PC-9 (cell line): ENCODE measurements at regions of chr1 and their contacts with region 1.

Region 1: DNA sequence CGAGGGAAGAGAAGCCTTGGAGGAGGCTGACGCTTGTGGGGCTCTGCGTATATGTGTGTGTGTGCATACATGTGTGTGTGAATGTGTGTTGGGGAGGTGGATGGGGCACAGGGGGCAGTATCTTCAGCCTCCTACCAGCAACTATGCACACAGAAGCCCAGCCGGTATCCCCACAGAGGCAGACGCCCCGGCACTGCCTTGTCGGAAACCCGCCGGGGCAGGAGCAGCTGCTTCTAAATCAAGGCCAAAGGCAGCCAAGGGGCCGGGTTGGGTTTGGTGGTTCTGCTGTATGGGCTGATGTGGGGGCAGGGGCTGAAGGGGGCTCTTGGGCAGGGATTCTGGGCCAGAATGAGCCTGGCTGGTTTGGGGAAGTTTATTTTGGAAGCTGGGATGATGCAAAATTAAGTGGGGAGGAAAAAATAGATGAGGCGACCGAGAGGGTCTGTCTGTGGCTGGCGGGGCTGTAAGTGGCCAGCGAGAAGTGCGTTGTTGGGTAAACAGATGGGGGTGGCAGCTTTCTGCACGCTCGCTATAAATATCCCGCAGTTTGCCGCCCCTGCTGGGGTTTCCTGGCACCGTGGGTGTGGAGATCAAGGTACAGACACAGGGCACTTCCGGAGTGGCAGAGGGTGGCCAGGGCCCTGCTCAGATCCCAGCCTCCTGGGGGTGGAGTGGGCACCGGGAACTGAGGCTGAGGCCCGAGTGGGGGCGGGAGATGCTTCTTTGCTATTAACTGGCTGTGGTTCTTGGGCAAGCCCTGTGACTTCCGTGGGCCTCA is 11.0 kb upstream of the WNT4 start:
- DNase-seq: no peak
- H3K4me3 ChIP-seq: no peak overlapping the region
- H3K27ac ChIP-seq: no peak overlapping the region
- H3K4me1 ChIP-seq: no peaks in the 10 kb centered on the region
- H3K27me3 ChIP-seq: no peaks in the 10 kb centered on the region
- CTCF ChIP-seq: no peak

Region 2: DNA sequence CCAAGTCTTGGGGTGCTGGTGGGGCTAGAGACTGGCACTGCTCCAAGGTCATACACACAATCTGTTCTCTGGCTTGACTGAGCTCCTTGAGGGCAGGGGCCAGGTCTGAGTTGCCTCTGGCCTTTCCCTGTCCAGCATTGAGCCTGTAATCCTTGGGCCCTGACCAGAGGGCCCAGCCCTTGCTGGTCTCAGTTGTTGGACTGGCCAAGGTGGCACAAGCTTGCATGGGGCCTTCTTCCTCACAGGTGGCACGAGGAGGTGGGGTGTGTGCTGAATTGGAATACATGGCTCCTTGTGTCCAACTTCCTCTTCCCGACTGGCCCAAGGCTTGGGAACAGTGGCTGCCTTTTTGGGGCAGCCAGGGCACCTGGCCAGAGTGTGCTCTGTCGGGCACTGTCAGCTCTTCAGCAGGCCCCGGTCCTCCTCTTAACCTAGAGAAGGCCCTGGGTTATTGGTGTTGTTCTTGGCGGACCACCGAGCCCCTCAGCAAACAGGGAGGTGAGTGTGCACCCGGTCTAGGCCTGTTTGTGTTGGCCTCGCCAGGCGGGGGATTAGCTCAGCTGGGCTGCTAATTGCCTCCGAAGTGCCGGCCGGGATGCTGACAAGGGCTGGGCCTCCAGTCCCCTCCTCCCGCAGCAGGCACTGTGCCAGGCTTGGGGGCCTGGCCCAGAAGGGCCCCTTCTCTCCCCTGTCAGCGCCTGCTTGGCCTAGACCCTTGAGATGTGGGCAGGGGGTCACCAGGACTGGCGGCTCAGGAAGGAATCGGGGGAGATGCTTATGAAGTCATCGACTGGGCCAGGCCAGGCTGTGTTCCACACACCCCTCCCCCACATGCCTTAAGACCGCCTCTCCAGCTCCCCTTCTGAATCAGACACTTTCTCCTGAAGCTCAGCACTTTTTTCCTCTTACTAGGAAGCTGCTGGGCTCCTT is 39.5 kb before region 1 on chr1:
- CTCF ChIA-PET with region 1: no interaction called
- POLR2A ChIA-PET with region 1: no interaction called
- intact Hi-C with region 1: no loop called
- DNase-seq: no peak
- H3K4me3 ChIP-seq: no peak overlapping the region
- H3K27ac ChIP-seq: no peak overlapping the region
- H3K4me1 ChIP-seq: no peaks in the 10 kb centered on the region
- H3K27me3 ChIP-seq: no peaks in the 10 kb centered on the region
- CTCF ChIP-seq: no peak

Region 3: GRCh38 chr1:22234476-22235030 is 80.7 kb after region 1 on chr1:
- CTCF ChIA-PET with region 1: no interaction called
- POLR2A ChIA-PET with region 1: interaction called, 15 read pairs
- intact Hi-C with region 1: no loop called
- DNase-seq: no peak
- H3K4me3 ChIP-seq: no peak overlapping the region
- H3K27ac ChIP-seq: no peak overlapping the region
- H3K4me1 ChIP-seq: peaks cover 27% of the 10 kb centered on the region
- H3K27me3 ChIP-seq: no peaks in the 10 kb centered on the region
- CTCF ChIP-seq: no peak

Region 4: GRCh38 chr1:22350171-22350909 is 196.5 kb after region 1 on chr1:
- CTCF ChIA-PET with region 1: no interaction called
- POLR2A ChIA-PET with region 1: interaction called, 11 read pairs
- intact Hi-C with region 1: no loop called
- DNase-seq: no peak
- H3K4me3 ChIP-seq: no peak overlapping the region
- H3K27ac ChIP-seq: no peak overlapping the region
- H3K4me1 ChIP-seq: 0 out of 2 replicates have a peak, but pooled peaks cover 11% of the 10 kb centered on the region
- H3K27me3 ChIP-seq: peaks cover 5% of the 10 kb centered on the region
- CTCF ChIP-seq: no peak